Left ventricle myocardium superior (tissue), 1 donor: ENCODE measurements at regions of chr2 and their contacts with region 1.

Region 1: DNA sequence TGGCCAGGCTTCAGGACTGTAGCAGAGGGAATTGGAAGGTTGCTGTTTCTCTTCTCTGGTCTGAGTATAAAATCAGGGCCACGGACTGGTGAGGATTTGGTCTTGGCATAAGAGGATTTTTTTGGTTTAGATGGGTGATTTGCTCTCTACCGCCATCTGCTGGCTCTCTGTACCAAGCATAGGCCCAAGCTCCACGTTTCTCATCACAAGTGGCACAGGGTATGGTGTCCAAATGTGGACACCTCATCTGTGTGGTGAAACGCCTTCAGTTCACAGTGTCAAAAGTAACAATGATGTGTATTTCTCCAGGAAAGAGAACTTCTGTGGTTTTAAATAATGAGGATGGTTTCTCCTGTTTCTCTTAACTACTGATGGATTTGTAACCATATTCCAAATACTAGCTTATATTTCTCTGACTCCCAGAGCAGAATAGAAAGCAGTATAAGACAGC is 115.1 kb downstream of the EML6 start:
- DNase-seq: peak; percentile 56
- ATAC-seq: peak; percentile 85

Region 2: GRCh38 chr2:54106631-54107454 is 731.8 kb before region 1 on chr2:
- intact Hi-C with region 1: loop called (anchors 2 kb)
- DNase-seq: no peak
- ATAC-seq: peak; percentile 73

Region 3: DNA sequence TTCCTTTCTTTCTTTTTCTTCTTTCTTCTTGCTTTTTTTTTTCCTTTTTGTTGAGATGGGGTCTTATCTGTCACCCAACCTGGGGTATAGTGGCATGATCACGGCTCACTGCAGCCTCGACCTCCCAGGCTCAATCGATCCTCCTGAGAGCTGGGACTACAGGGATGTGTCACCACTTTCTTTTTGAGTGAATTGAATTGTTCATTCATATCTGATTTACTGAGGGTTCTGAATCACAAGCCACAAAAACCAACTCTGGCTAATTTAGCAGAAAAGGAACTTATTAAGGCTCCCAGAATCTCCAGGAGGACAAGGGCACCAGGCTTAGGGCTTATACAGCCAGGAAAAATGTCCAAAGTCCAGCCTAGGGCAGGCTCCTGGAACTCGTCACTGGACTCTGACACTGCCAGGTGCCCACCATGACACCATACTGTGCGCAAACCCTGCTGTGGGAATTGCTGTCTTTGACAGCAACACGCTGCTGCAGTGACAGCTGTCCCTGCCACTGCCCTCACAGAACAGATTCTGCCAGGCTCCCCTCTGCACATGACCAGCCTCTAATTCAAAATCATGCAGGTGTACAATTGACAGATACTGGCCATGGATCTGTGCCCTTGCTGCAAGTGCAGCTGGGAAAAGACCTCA is 158.1 kb before region 1 on chr2:
- intact Hi-C with region 1: no loop called
- DNase-seq: no peak
- ATAC-seq: peak; percentile 79